Activated naive CD4-positive, alpha-beta T cell treated with anti-CD3 and anti-CD28 coated beads for 36 hours (primary cell): ENCODE measurements at regions of chr1 and their contacts with region 1.

Region 1: GRCh38 chr1:89298461-89298860 is 25.8 kb upstream of the GBP5 start:
- DNase-seq: no peak
- H3K4me3 Mint-ChIP-seq: no peak overlapping the region
- H3K27ac Mint-ChIP-seq: no peak overlapping the region
- H3K4me1 Mint-ChIP-seq: peaks cover 55% of the 10 kb centered on the region
- H3K27me3 Mint-ChIP-seq: no peaks in the 10 kb centered on the region

Region 2: GRCh38 chr1:89286549-89287180 is 11.8 kb before region 1 on chr1:
- CTCF ChIA-PET with region 1: interaction called, 7 read pairs
- intact Hi-C with region 1: loop called (anchors 1 kb)
- DNase-seq: no peak
- H3K4me3 Mint-ChIP-seq: no peak overlapping the region
- H3K27ac Mint-ChIP-seq: peak overlapping the region; percentile 52
- H3K4me1 Mint-ChIP-seq: peaks cover 69% of the 10 kb centered on the region
- H3K27me3 Mint-ChIP-seq: no peaks in the 10 kb centered on the region

Region 3: GRCh38 chr1:89310505-89310904 is 12.0 kb after region 1 on chr1:
- CTCF ChIA-PET with region 1: interaction called, 3 read pairs
- intact Hi-C with region 1: loop called (anchors 1 kb)
- DNase-seq: no peak
- H3K4me3 Mint-ChIP-seq: no peak overlapping the region
- H3K27ac Mint-ChIP-seq: peak overlapping the region; percentile 86
- H3K4me1 Mint-ChIP-seq: peaks cover 49% of the 10 kb centered on the region
- H3K27me3 Mint-ChIP-seq: no peaks in the 10 kb centered on the region